Dorsolateral prefrontal cortex (tissue), 120 donors: ENCODE measurements at regions of chr13 and their contacts with region 1.

Region 1: DNA sequence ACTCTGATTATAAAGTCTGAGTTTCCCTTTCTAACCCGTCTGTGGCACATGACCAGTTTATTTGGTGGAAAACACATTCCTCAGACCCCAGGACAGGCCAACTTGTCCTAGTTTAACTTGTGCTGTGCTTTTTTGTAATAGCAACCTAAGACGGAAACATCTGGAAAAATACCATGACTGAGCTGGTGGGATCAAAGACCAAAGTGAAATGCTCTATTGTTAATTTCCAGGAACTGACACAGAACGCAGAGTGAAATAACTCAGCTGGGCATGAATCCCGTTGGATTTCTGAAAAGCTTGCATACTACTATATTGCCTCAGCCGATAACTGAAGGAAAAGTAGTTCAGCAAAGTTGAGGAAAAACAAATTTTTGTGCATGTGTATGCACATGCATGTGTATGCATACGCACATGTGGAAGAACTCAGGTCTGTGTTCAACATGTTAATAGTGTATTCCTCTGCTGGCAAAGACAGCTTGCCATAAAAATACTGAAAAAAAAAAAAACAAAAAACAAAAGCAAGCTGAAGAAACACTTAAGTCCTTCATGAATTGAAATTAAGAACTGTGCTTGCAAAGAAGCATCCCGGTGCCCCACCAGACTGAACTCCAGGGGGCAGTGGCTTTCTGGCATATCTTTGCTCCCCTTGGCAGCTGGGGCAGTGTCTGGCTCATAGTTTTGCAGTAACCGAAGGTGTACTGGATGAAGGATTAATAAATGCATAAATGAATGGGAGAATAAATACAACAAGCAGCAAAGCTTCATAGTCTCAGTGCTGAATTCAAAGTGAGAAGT is 187.8 kb downstream of the LHFPL6 start:
- DNase-seq: peak in 9 of 10 donors; percentile 10 to 66 (median 56)
- H3K4me3 ChIP-seq: peak overlapping the region in 38 of 59 donors; percentile 1 to 48 (median 24)
- H3K27ac ChIP-seq: peak overlapping the region; percentile 4 to 88 (median 57)
- H3K27me3 ChIP-seq: no peaks in the 10 kb centered on the region
- CTCF ChIP-seq: peak in 53 of 56 donors; percentile 16 to 79 (median 59)

Region 2: DNA sequence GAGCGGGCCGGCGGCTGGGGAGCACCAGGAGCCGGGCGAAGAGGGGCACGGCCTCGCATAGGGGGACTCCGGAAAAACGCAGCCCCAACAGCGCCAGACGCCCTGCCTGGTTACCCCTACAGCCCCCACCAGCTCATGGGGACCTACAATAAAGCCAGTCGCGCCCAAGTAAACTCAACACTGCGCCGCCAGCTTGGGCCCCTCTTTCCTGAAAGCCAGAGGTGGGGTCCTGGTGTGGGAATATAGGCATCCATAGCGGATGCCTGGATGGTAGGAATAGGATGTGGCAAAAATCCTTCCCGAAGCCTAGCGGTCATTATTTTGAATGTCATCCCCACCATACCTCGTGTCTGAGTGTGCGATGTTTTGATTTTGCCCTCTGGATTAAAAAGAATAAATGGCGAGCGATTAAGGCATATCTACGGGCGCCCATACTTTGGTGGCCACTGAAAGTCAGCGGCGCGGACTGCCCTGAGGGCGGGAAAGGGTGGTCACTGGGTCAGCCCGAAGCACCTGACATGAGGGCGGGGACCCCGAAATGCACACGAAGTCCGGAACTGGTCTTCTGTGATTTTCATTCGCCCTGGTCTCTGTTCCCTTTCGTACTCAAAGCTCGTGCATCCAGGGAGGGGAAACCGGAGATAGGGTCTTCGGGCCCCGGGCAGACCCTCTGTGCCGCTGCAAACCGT is 377.2 kb before region 1 on chr13 and contains the starts of genes NHLRC3 and PROSER1:
- intact Hi-C with region 1: loop called in 1 of 2 experiments (anchors 10 kb)
- DNase-seq: peak; percentile 87 to 98 (median 96)
- H3K4me3 ChIP-seq: peak within 1 kb of the TSS; percentile 67 to 100 (median 94)
- H3K27ac ChIP-seq: peak within 1 kb of the TSS; percentile 63 to 98 (median 94)
- H3K27me3 ChIP-seq: no peaks in the 10 kb centered on the region
- CTCF ChIP-seq: peak in 32 of 56 donors; percentile 8 to 54 (median 25)
- total RNA-seq, gene NHLRC3: 18.1 to 43.9 (median 30.2) TPM
- total RNA-seq, gene PROSER1: 17.7 to 56.8 (median 32.6) TPM

Region 3: DNA sequence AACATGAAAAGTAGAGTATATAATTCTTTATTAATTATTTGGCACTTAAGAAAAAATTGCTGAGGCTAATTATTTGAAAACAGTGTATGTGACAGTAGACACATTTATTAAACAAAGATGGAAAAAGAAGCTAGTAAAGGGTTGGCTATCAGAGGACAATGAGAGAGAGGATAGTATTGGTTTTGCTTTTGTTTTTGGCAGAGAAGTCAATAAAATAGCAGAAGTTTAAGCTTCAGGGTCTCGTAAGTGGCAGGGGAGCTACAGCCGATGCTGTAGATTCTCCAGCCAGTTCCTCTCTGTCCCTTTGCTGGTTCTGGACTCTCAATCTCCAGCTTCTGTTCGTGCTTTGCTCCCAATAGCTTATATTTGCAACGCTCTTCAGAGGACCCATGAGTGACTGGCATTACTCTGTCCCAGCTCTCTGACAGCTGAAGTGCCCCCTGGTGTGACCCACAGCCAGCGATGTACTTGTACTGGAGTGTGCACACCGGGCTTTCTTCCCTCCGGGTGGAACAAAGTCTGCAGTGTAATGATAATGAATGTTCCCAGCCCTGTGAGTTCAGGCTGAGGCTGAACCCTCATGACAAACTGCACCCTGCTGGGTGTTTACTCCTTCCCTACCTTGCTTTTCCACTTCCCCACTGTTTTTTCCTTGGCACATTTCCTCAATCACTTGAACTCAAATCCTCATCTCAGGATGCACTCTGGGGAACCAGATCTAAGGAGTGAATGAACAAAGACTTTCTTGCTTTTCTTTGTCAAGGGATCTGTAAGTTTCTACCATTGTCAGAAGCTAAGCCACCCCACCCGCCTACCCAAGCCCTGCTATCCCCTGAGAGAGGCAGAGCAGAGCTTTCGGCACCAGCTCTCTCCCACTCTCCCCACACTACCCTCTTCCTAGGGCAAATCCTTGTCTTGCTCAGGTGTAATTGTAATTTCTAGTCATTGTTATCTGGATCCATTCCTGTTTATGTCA is 67.0 kb before region 1 on chr13:
- intact Hi-C with region 1: no loop called
- DNase-seq: peak in 2 of 10 donors; percentile 26 to 31
- H3K4me3 ChIP-seq: peak overlapping the region in 33 of 59 donors; percentile 3 to 50 (median 27)
- H3K27ac ChIP-seq: peak overlapping the region in 10 of 59 donors; percentile 0 to 53 (median 21)
- H3K27me3 ChIP-seq: no peaks in the 10 kb centered on the region
- CTCF ChIP-seq: no peak